ENCODE measurements at regions of chr5 and their contacts with region 1.

Region 1: DNA sequence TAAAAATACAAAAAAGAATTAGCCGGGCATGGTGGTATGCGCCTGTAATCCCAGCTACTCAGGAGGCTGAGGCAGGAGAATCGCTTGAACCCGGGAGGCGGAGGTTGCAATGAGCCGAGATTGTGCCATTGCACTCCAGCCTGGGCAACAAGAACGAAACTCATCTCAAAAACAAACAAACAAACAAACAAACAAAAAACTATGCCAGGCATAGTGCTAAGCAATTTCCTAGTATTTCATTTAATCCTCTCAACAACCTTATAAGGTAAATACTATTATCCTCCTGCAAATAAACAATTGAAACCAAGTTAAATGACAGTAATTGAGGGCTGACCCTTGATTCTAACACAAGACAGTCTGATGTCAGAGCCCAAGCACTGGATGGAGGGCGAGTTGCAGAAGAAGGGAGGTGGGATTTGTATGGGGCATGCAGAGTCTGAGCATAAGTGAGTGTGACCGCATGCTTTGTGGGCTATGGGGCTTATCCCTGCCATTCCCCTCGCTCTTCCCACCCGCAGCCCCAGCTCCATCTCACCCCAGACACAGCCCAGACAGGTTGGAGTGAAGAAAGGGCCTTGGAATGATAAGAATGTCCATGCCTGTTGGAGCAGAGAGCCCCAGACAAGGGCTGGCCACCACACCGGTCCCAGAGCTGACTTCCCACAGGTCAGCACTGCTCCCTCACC is 24.3 kb upstream of the RPS14 start:
- DNase-seq: peak; percentile 95
- H3K27ac ChIP-seq: peak overlapping the region; percentile 92
- CTCF ChIP-seq: no peak

Region 2: GRCh38 chr5:150363185-150363584 is 110.6 kb before region 1 on chr5:
- CTCF ChIA-PET with region 1: no interaction called
- POLR2A ChIA-PET with region 1: interaction called, 10 read pairs
- DNase-seq: no peak
- H3K27ac ChIP-seq: no peak overlapping the region
- CTCF ChIP-seq: no peak

Region 3: DNA sequence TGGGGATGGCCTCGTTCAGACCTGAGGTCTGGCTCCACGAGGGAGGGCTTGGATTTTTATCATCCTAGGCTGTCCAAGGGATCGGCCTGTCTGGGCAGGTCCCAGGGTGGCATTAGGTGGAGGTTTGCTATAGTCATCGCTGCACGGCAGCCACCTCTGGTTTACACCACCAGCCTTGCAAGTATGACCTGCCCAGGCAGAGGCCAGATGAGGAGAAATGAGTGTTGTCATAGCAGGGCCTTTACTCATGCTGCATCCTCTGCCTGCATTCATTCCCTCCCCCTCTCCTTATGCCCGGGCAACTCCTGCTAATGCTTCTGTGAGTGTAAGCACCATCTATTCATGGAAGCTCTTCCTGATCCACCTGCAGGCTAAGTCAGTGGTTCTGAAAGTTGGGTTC is 18.8 kb after region 1 on chr5:
- CTCF ChIA-PET with region 1: interaction called, 4 read pairs
- POLR2A ChIA-PET with region 1: interaction called, 13 read pairs
- DNase-seq: peak; percentile 98
- H3K27ac ChIP-seq: peak overlapping the region; percentile 95
- CTCF ChIP-seq: no peak

Region 4: GRCh38 chr5:150700594-150701293 is 226.9 kb after region 1 on chr5 and contains the start of gene RBM22:
- CTCF ChIA-PET with region 1: no interaction called
- POLR2A ChIA-PET with region 1: no interaction called
- DNase-seq: peak; percentile 89
- H3K27ac ChIP-seq: peak within 1 kb of the TSS; percentile 89
- CTCF ChIP-seq: peak; percentile 84

Measured in RWPE1 (cell line).